Endothelial cell of umbilical vein (primary cell): ENCODE measurements at regions of chr3 and their contacts with region 1.

Region 1: GRCh38 chr3:114056130-114057010 is at the starts of genes CCDC191 and QTRT2:
- DNase-seq: peak; percentile 99
- H3K4me3 ChIP-seq: peak within 1 kb of the TSS; percentile 50 to 88 (median 86)
- H3K27ac ChIP-seq: peak within 1 kb of the TSS; percentile 31
- H3K4me1 ChIP-seq: peaks cover 16% of the 10 kb centered on the region
- H3K27me3 ChIP-seq: no peaks in the 10 kb centered on the region
- CTCF ChIP-seq: no peak
- POLR2A ChIP-seq: peak; percentile 55
- total RNA-seq, gene CCDC191: 3.8 and 4.9 TPM in 2 replicates
- total RNA-seq, gene QTRT2: 29.5 and 42.8 TPM in 2 replicates

Region 2: GRCh38 chr3:113696658-113697499 is 359.5 kb before region 1 on chr3:
- CTCF ChIA-PET with region 1: no interaction called
- POLR2A ChIA-PET with region 1: no interaction called
- dilution Hi-C with region 1: no loop called
- intact Hi-C with region 1: loop called (anchors 1 kb)
- DNase-seq: peak; percentile 100
- H3K4me3 ChIP-seq: peak overlapping the region; percentile 37 to 94 (median 90)
- H3K27ac ChIP-seq: peak overlapping the region; percentile 30
- H3K4me1 ChIP-seq: peaks cover 14% of the 10 kb centered on the region
- H3K27me3 ChIP-seq: no peaks in the 10 kb centered on the region
- CTCF ChIP-seq: peak in 1 of 2 donors; percentile 14
- POLR2A ChIP-seq: no peak

Region 3: GRCh38 chr3:113844622-113845222 is 211.6 kb before region 1 on chr3:
- CTCF ChIA-PET with region 1: interaction called, 16 read pairs
- POLR2A ChIA-PET with region 1: no interaction called
- dilution Hi-C with region 1: no loop called
- intact Hi-C with region 1: loop called (anchors 5 kb)
- DNase-seq: peak; percentile 63
- H3K4me3 ChIP-seq: no peak overlapping the region
- H3K27ac ChIP-seq: no peak overlapping the region
- H3K4me1 ChIP-seq: no peaks in the 10 kb centered on the region
- H3K27me3 ChIP-seq: no peaks in the 10 kb centered on the region
- CTCF ChIP-seq: peak; percentile 34 to 46
- POLR2A ChIP-seq: no peak

Region 4: GRCh38 chr3:114034787-114035545 is 21.4 kb before region 1 on chr3:
- CTCF ChIA-PET with region 1: no interaction called
- POLR2A ChIA-PET with region 1: no interaction called
- dilution Hi-C with region 1: no loop called
- intact Hi-C with region 1: no loop called
- DNase-seq: no peak
- H3K4me3 ChIP-seq: no peak overlapping the region
- H3K27ac ChIP-seq: no peak overlapping the region
- H3K4me1 ChIP-seq: peaks cover 3% of the 10 kb centered on the region
- H3K27me3 ChIP-seq: no peaks in the 10 kb centered on the region
- CTCF ChIP-seq: no peak
- POLR2A ChIP-seq: no peak

Region 5: DNA sequence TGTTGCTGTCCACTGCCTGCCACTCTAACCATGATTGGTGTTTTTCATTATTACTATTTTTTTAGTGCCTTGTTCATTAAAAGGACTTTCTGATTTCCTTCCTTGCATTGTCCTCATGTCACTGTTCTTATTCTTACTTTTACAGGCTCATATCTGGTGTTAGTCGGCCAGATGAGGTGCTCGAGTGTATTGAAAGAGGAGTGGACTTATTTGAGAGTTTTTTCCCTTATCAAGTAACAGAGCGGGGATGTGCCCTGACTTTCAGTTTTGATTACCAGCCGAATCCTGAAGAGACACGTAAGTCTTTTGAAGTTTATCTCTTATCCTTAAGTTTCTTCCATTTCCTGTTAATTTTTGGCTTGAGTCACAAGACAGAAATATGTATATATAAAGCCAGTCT is 23.4 kb after region 1 on chr3:
- CTCF ChIA-PET with region 1: no interaction called
- POLR2A ChIA-PET with region 1: no interaction called
- dilution Hi-C with region 1: no loop called
- intact Hi-C with region 1: loop called (anchors 1 kb)
- DNase-seq: peak; percentile 88
- H3K4me3 ChIP-seq: peak overlapping the region in 2 of 3 experiments; percentile 29 to 55
- H3K27ac ChIP-seq: peak overlapping the region; percentile 63
- H3K4me1 ChIP-seq: peaks cover 22% of the 10 kb centered on the region
- H3K27me3 ChIP-seq: no peaks in the 10 kb centered on the region
- CTCF ChIP-seq: no peak
- POLR2A ChIP-seq: no peak

Region 6: DNA sequence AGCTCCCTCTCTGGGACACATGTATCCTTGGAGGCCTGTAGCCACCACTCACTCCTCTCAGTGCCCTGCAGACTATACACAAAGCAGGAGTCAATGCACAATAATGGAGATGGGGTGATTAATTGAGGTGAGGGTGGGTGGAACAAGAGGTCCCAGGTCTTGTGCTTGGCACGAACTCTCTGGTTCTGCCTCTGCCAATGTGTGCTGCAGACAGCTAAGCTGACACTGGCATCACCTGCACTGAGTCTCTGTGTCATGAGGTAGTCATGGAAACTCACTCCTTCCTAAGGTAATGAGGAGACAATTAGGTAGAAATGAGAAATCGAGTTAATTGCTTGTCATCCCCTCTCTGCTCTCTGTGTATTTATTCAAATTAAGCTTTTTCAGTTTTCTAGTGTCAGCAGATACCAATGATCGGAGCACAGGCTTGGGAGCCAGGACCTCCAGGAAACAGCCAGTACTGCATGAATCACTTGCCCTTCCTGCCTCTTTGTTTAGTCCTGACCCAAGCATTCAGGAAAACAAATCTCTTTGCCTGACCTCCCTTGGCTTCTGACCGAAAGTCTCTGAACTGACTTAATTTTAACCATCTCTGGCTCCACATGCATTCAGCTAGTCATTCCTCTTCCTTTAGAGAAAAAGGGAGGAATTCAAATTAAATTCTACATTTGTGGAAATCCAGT is 65.8 kb after region 1 on chr3:
- CTCF ChIA-PET with region 1: no interaction called
- POLR2A ChIA-PET with region 1: no interaction called
- dilution Hi-C with region 1: no loop called
- intact Hi-C with region 1: loop called (anchors 1 kb)
- DNase-seq: peak; percentile 92
- H3K4me3 ChIP-seq: peak overlapping the region in 1 of 3 experiments; percentile 3
- H3K27ac ChIP-seq: peak overlapping the region; percentile 66
- H3K4me1 ChIP-seq: peaks cover 20% of the 10 kb centered on the region
- H3K27me3 ChIP-seq: no peaks in the 10 kb centered on the region
- CTCF ChIP-seq: no peak
- POLR2A ChIP-seq: no peak